ENCODE measurements at regions of chr12 and their contacts with region 1.

Region 1: DNA sequence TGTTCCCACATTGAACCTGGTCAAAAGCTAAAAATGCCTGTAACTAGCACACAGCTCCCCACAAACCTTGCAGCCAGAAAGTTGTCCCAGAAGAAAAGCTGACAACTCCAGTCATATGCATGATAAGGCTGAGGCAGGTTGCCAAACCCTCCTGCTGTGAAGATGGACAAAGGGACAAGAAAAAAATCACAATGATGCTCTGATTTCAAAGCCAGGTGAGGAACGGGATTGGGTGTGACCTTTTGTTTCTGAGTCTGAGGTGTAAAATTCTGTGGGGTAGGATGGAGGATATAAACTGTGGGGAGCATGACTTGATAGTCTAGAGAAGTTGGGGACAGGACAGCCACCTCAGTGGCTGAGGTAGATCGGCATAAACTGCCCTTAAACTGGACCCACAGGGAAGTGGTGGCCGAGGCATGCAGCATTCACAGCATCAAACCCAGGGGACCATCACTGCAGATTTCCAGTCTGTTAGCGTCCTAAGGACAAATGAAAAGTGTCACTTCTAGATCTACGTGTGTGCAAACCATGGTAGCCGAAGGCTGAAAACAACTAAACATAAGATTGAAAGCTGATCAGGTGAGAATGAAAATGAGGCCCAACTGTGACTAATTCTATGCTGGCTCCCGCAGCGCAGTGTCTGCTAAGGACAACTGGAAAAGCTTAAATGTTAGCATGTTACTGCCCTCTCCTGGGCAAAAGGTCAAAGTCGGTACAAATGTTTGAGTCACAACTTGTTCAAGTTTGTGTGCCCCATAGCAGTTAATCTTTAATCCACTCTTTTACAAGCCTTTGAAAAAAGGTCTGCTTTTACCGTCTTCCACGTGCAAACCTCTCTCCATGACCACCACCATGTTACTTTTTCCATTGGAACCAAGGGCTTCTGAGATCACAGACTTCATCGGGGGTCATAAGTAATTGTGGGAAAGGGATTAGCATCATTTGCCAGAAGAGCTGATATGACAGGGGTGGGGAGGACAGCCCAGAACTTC is 39.8 kb downstream of the GRIN2B start:
- ATAC-seq: peak; percentile 83 to 99 (median 92)
- H3K4me3 ChIP-seq: no peak overlapping the region
- H3K27ac ChIP-seq: no peak overlapping the region
- H3K4me1 ChIP-seq: peaks cover 8 to 9% of the 10 kb centered on the region in 2 donors

Region 2: DNA sequence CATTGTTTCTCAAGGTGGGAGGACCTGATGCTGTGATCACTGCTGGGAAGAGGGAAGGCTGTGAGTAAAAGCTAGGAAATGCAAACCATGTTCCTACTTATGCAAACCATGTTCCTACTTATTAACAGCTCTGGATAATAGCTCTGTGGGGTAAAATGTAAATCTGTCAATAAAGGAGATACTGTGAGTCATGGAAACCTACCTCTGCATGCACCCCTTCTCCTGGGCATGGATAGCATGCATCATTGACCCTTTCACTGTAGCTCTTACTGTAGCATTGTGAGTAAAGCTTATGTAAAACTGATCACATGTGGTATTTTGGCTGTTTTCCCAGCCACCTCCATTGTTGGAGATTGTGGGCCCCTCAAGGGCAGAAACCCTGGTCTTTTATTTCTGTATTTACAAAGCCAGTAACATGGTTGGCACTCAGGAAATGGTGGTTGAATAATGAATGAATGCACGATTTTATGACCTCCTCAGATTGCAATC is 213.8 kb before region 1 on chr12:
- in situ Hi-C with region 1: loop called in 3 of 9 experiments (anchors 25 kb)
- ATAC-seq: peak; percentile 68 to 95 (median 94)
- H3K4me3 ChIP-seq: no peak overlapping the region
- H3K27ac ChIP-seq: no peak overlapping the region
- H3K4me1 ChIP-seq: peaks cover 11 to 15% of the 10 kb centered on the region in 2 donors